CD4-positive, alpha-beta memory T cell (primary cell): ENCODE measurements at regions of chr3 and their contacts with region 1.

Region 1: DNA sequence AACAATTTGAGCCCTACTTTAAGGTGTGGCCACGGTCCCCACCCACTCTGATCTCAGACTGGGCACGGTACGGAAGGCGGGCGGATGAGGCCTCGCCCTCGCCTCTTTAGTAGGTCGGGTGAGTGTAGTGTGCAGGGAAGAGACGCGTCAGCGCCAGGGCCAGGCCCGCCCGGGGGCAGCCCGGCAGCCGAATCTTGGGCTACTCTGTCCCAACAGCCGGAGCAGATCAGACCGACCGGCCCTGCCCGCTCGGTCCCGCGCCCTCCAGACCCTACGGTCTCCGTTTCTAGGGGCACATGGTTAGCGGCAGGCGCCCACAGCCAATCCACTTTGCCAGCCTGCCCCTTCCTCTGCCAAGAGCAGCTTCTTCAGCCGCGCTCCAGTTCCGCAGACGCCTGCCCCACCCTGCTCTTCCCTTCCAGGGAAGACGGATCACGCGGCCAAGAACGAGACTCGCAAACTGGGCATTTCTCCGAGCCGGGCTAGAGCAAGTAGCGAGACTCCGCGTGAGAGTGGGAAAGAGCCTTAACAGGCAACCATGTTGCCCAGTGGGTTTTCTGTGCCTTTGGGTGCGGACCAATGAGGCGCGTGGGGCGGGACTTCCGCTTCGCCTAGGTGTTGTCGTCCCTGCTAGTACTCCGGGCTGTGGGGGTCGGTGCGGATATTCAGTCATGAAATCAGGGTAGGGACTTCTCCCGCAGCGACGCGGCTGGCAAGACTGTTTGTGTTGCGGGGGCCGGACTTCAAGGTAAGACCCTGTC is at the start of gene RNF13:
- DNase-seq: peak; percentile 90 to 94 (median 91)
- H3K4me3 ChIP-seq: peak within 1 kb of the TSS; percentile 91 to 92
- H3K4me3 Mint-ChIP-seq: peak within 1 kb of the TSS; percentile 99 to 100 (median 100)
- H3K27ac ChIP-seq: peak within 1 kb of the TSS; percentile 88
- H3K27ac Mint-ChIP-seq: peak within 1 kb of the TSS; percentile 96 to 100 (median 99)
- H3K4me1 ChIP-seq: peaks cover 42% of the 10 kb centered on the region
- H3K4me1 Mint-ChIP-seq: peaks cover 34 to 63% (median 45%) of the 10 kb centered on the region in 4 donors
- H3K27me3 ChIP-seq: no peaks in the 10 kb centered on the region
- H3K27me3 Mint-ChIP-seq: peaks cover 2 to 4% of the 10 kb centered on the region in 2 donors
- total RNA-seq, gene RNF13: 63.3 to 68.2 TPM

Region 2: DNA sequence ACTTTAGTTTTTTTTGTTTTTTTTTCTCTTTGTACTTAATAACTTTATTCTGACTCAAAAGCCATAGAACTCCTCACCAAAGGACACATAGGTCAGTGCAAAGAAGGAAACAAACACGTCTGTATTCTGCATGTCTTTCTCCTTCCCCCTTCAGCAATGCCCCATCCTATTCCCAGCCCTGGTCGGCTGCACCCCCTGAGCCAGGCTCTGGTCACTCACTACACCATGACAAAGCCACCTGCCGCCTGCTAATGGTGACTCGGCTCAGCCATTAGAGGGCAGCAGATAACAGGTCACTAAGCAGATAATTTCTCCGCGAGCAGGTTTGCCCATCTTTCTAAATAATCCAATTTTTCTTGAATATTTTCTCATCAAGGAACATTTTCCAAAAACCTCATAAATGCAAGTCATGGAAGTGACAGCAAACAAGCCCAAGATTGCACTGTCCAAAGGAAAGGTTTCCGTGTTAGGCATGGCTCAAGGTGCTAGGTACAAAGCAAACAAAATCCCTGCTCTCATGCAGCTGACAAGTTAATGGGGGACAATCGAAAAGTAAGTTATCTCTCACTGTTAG is 300.5 kb before region 1 on chr3:
- CTCF ChIA-PET with region 1: interaction called, 4 read pairs
- POLR2A ChIA-PET with region 1: no interaction called
- intact Hi-C with region 1: loop called (anchors 2 kb)
- DNase-seq: peak in 3 of 5 donors; percentile 7 to 24 (median 8)
- H3K4me3 ChIP-seq: no peak overlapping the region
- H3K4me3 Mint-ChIP-seq: peak overlapping the region in 3 of 8 donors; percentile 25 to 29 (median 27)
- H3K27ac ChIP-seq: no peak overlapping the region
- H3K27ac Mint-ChIP-seq: no peak overlapping the region
- H3K4me1 ChIP-seq: no peaks in the 10 kb centered on the region
- H3K4me1 Mint-ChIP-seq: peaks cover 0 to 10% (median 6%) of the 10 kb centered on the region in 4 donors
- H3K27me3 ChIP-seq: peaks cover 5% of the 10 kb centered on the region
- H3K27me3 Mint-ChIP-seq: peaks cover 2 to 11% of the 10 kb centered on the region in 2 donors

Region 3: GRCh38 chr3:149541091-149541491 is 271.7 kb before region 1 on chr3:
- CTCF ChIA-PET with region 1: no interaction called
- POLR2A ChIA-PET with region 1: no interaction called
- intact Hi-C with region 1: no loop called
- DNase-seq: no peak
- H3K4me3 ChIP-seq: no peak overlapping the region
- H3K4me3 Mint-ChIP-seq: no peak overlapping the region
- H3K27ac ChIP-seq: no peak overlapping the region
- H3K27ac Mint-ChIP-seq: no peak overlapping the region
- H3K4me1 ChIP-seq: no peaks in the 10 kb centered on the region
- H3K4me1 Mint-ChIP-seq: no peaks in the 10 kb centered on the region
- H3K27me3 ChIP-seq: no peaks in the 10 kb centered on the region
- H3K27me3 Mint-ChIP-seq: peaks cover 0 to 6% of the 10 kb centered on the region in 2 donors

Region 4: DNA sequence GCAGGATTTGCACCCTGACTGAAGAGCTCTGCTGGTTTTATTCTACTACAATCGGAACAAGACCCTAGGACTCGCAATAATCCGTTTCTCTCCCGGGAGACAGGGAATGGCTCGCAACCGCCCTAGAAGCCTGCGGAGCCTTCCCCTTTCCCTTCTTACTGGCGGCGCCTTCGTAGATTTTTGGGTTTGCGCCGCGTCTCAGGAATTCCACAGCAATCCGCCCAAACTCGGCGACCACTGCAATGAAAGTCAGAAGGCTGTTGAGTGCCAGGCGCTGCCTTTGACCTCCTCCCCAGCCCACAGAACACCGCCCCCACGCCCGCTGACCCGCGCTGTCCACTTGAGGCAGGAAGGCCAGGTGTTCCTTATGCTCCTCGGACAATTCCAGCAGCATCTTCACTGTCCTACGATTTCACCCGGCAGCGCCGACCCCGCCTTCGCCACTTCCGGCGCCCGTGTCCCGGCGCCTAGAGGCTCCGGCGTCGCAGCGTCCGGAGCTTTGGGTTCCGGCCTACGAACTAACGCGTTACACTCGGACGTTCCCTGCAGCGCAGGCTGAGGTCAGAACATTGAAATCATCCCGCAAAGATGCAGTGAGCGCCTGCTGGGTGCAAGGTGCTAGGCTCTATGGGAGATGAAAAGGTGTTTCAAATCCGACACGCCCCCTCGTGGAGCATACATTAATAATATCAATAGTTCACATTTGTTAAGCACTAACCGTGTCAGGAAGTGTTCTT is 60.6 kb before region 1 on chr3 and contains the start of gene COMMD2:
- CTCF ChIA-PET with region 1: interaction called, 25 read pairs
- POLR2A ChIA-PET with region 1: interaction called, 27 read pairs
- intact Hi-C with region 1: loop called (anchors 1 kb)
- DNase-seq: peak; percentile 67 to 71 (median 69)
- H3K4me3 ChIP-seq: peak within 1 kb of the TSS; percentile 42 to 85
- H3K4me3 Mint-ChIP-seq: peak within 1 kb of the TSS; percentile 94 to 98 (median 97)
- H3K27ac ChIP-seq: peak within 1 kb of the TSS; percentile 70
- H3K27ac Mint-ChIP-seq: peak within 1 kb of the TSS; percentile 86 to 98 (median 95)
- H3K4me1 ChIP-seq: peaks cover 28% of the 10 kb centered on the region
- H3K4me1 Mint-ChIP-seq: peaks cover 17 to 55% (median 33%) of the 10 kb centered on the region in 4 donors
- H3K27me3 ChIP-seq: no peaks in the 10 kb centered on the region
- H3K27me3 Mint-ChIP-seq: no peaks in the 10 kb centered on the region
- total RNA-seq, gene COMMD2: 38.0 to 44.7 TPM

Region 5: GRCh38 chr3:149771652-149772271 is 41.0 kb before region 1 on chr3:
- CTCF ChIA-PET with region 1: interaction called, 37 read pairs
- POLR2A ChIA-PET with region 1: no interaction called
- intact Hi-C with region 1: no loop called
- DNase-seq: peak in 3 of 5 donors; percentile 9 to 20 (median 16)
- H3K4me3 ChIP-seq: no peak overlapping the region
- H3K4me3 Mint-ChIP-seq: no peak overlapping the region
- H3K27ac ChIP-seq: no peak overlapping the region
- H3K27ac Mint-ChIP-seq: peak overlapping the region in 1 of 7 donors; percentile 0
- H3K4me1 ChIP-seq: no peaks in the 10 kb centered on the region
- H3K4me1 Mint-ChIP-seq: no peaks in the 10 kb centered on the region
- H3K27me3 ChIP-seq: no peaks in the 10 kb centered on the region
- H3K27me3 Mint-ChIP-seq: peaks cover 4 to 7% of the 10 kb centered on the region in 2 donors

Region 6: DNA sequence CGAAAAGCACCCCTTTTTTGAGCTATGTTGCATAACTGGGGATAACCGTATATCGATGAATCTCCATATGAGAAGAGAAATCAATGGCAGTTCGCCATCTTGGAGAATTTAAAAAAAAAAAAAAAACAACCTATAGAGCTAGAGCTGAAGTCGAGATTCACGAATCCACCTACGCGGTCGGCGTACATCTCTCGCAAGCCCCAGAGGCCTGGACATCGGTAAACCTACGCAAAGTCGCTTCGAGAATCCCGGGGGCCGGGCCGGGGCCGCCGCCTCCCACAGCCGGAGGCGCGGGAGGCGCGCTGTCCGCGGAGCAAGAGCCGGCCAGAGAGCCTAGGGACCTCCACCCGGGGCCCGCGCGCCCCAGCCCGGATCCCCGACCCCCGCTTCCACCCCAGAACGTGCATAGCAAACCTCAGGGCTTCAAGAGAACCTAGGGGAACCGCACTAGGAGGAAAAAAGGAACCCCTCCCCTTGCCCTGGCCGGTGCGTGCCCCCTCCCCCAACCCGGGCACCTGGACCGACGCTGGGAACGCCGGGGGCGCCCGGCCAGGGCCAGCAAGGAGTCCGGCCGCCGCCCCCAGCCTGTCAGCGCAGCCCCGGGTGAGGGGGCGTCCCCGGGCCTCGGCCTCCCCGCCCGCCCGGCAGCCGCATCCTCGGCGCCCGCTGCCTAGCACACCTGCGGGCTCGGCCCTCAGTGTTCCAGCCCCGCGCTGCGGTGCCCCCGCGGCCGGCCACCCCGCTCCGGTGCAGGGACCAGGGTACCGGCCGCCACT is 157.3 kb after region 1 on chr3:
- CTCF ChIA-PET with region 1: no interaction called
- POLR2A ChIA-PET with region 1: interaction called, 3 read pairs
- intact Hi-C with region 1: loop called (anchors 5 kb)
- DNase-seq: peak; percentile 72 to 80 (median 77)
- H3K4me3 ChIP-seq: peak overlapping the region; percentile 8 to 44
- H3K4me3 Mint-ChIP-seq: peak overlapping the region; percentile 89 to 96 (median 90)
- H3K27ac ChIP-seq: peak overlapping the region; percentile 27
- H3K27ac Mint-ChIP-seq: peak overlapping the region; percentile 73 to 91 (median 87)
- H3K4me1 ChIP-seq: peaks cover 12% of the 10 kb centered on the region
- H3K4me1 Mint-ChIP-seq: peaks cover 14 to 20% (median 19%) of the 10 kb centered on the region in 4 donors
- H3K27me3 ChIP-seq: peaks cover 7% of the 10 kb centered on the region
- H3K27me3 Mint-ChIP-seq: peaks cover 7 to 15% of the 10 kb centered on the region in 2 donors

Region 7: GRCh38 chr3:150603153-150603979 is 790.6 kb after region 1 on chr3 and contains the start of gene SELENOT:
- CTCF ChIA-PET with region 1: no interaction called
- POLR2A ChIA-PET with region 1: no interaction called
- intact Hi-C with region 1: loop called (anchors 10 kb)
- DNase-seq: peak; percentile 92 to 98 (median 96)
- H3K4me3 ChIP-seq: peak within 1 kb of the TSS; percentile 71 to 91
- H3K4me3 Mint-ChIP-seq: peak within 1 kb of the TSS; percentile 92 to 98 (median 96)
- H3K27ac ChIP-seq: peak within 1 kb of the TSS; percentile 97
- H3K27ac Mint-ChIP-seq: peak within 1 kb of the TSS; percentile 97 to 99 (median 98)
- H3K4me1 ChIP-seq: peaks cover 53% of the 10 kb centered on the region
- H3K4me1 Mint-ChIP-seq: peaks cover 37 to 78% (median 61%) of the 10 kb centered on the region in 4 donors
- H3K27me3 ChIP-seq: no peaks in the 10 kb centered on the region
- H3K27me3 Mint-ChIP-seq: no peaks in the 10 kb centered on the region
- total RNA-seq, gene SELENOT: 71.8 to 87.1 TPM